HEK293 (cell line): ENCODE measurements at regions of chr5 and their contacts with region 1.

Region 1: DNA sequence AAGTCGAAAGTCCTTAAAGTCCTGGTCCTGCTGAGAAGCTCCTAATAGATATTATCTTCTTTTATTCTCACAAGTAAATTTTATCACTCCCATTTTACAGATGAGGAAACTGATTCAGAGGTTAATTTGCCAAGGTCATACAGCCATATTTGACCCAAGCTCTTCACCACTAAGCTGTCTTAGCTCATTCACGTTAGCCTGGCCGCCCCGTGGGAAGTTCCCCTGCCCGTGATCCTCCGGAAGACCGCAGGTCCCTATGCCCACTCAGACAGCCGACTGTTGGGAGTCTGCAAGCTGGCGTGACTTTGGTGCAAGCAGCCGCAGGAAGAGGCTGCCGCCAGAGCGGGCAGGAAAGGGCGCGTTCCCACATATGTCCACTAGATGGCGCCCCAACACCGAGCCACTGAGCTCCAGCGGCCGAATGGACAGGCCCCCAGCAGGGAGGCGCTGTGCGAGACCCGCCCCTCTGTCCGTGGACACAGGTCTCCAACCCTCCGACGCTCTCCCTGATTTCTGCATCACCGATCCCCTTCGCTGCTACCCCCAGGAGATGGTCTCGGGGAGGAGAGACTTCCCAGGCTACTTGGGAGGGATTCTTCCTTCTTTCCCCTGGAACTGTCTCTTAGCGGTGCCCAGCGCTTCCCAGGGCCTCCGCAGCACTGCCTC is 10.0 kb upstream of the ARAP3 start:
- H3K4me3 ChIP-seq: peak overlapping the region; percentile 2; the same call in 1 of the 2 replicates
- H3K27ac ChIP-seq: no peak overlapping the region
- H3K4me1 ChIP-seq: no peaks in the 10 kb centered on the region
- CTCF ChIP-seq: peak; percentile 99

Region 2: GRCh38 chr5:141492168-141492885 is 199.7 kb before region 1 on chr5:
- CTCF ChIA-PET with region 1: no interaction called
- POLR2A ChIA-PET with region 1: no interaction called
- H3K4me3 ChIP-seq: no peak overlapping the region
- H3K27ac ChIP-seq: no peak overlapping the region
- H3K4me1 ChIP-seq: no peaks in the 10 kb centered on the region
- CTCF ChIP-seq: no peak

Region 3: DNA sequence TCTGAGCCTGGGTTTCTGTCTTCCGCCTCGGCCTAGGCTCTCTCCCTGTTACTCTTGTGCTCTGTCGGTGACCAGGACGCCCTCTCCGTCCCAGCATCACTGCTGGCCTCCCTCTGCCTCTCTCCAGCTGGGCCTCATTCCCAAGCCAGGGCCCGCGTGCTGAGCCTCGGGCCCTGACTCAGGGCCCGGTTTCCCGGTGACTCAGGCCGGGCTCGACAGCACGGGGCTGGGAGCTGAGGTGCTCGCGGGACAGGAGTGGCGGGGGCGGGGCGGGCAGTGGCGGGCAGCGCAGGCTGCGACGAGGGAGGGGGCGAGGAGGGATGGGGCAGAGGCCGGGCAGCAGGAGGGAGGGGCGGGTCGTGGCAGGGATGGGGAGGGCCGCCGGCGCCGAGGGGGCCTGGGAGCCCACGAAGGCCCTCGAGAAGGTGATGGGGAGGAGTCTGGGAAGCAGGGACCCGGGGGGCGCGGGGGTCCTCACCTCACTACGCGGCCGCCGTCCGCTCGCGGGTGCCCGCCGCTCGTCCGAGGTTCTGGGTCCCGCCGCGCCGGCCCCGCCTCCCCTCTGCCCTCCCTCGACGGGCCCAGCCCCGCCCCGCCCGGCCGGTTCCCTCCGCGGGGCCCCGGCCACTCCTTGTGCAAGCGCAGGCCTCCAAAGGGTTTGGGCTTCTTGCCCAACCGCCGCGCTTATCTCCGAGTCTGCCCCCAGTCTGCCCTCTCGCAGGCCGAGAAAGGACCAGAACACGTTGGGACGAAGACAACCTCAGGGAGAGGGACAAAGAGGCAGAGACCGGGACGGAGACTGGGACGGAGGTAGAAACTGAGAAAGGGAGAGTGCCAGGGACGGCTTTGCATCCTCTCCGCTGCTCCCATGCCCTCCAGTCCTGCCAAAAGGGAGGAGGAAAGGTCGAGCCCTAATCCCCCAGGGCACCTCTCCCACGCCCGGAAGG is 10.0 kb before region 1 on chr5 and contains the start of gene ARAP3:
- CTCF ChIA-PET with region 1: interaction called, 28 read pairs
- POLR2A ChIA-PET with region 1: interaction called, 8 read pairs
- H3K4me3 ChIP-seq: peak within 1 kb of the TSS; percentile 52
- H3K27ac ChIP-seq: peak within 1 kb of the TSS; percentile 52; the same call in 1 of the 2 replicates
- H3K4me1 ChIP-seq: no peaks in the 10 kb centered on the region
- CTCF ChIP-seq: no peak

Region 4: DNA sequence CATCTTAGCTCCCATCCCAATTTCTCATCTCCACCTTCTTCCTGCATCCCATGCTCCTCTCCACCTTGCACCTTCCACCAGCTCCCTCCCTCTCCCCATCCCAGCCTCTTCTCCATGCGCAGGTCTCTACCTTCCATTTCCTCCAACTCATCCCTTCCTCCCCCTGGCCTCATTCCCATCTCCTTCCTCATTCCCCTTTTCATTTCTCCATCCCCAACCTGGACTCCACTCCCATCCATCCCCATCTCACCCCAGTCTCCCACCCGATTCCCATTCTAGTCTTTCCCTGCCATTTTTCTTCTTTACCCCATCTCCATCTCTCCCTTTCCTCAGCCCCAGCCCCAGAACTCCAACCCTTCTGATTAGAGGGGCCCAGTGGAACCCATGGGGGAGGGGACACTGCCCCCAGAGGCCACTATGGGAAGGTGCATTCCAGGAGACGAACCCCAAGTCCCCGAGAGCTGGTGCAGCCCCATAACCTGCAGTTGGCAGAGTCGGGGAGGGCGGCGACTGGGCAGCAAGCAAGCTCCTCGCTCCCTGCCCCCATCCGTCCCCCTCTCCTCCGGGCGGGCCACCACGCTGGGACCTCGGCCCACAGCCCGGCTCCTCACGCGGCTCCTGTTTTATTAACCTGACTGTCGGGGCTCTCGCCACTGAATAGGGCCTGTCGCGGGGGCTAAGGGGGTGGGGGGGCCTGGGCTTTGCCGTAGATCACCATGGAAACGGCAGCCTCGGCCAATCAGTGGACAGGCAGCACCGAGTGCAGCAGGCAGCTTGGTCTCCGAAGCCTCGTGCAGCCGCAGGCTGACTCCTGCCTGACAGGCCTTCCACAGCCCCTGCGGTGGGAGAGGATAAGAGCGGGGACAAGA is 119.5 kb after region 1 on chr5:
- CTCF ChIA-PET with region 1: interaction called, 41 read pairs
- POLR2A ChIA-PET with region 1: no interaction called
- H3K4me3 ChIP-seq: no peak overlapping the region
- H3K27ac ChIP-seq: no peak overlapping the region
- H3K4me1 ChIP-seq: no peaks in the 10 kb centered on the region
- CTCF ChIP-seq: peak; percentile 59

Region 5: DNA sequence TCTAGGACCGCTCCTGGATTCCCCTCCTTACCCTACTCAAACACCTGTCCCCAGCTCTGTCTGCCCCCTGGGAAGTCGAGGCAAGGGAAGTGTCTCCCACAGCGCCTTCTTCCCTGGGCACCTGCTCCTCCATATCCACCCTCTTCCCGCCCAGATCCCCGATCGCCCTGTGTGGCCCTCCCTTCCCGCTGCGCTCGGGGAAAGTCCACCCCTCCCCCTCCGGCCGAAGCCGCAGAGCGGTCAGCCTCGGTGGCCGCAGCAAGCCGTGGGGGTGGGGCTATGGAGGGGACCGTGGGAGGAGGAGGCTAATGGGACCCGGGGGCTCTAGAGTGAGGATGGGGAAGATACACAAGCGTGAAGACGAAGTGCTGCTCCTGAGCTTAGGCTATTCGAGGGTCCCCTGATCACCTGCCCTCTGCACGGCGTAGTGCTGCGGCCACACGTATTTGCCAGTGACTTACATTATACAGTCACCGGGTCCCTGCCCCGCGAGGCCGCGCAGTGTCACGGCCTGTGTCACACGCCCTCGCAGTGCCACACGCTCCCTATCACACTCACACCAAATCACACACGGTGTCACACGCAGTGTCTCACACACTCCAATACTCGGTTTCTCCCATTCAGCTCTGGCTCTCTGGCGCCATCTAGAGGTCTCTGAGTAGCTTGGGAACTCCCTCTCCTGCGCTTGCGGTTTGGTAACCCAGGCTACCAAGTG is 186.9 kb after region 1 on chr5:
- CTCF ChIA-PET with region 1: interaction called, 104 read pairs
- POLR2A ChIA-PET with region 1: interaction called, 9 read pairs
- H3K4me3 ChIP-seq: peak overlapping the region; percentile 30
- H3K27ac ChIP-seq: peak overlapping the region; percentile 7; the same call in 1 of the 2 replicates
- H3K4me1 ChIP-seq: peaks cover 8% of the 10 kb centered on the region
- CTCF ChIP-seq: peak; percentile 96

Region 6: DNA sequence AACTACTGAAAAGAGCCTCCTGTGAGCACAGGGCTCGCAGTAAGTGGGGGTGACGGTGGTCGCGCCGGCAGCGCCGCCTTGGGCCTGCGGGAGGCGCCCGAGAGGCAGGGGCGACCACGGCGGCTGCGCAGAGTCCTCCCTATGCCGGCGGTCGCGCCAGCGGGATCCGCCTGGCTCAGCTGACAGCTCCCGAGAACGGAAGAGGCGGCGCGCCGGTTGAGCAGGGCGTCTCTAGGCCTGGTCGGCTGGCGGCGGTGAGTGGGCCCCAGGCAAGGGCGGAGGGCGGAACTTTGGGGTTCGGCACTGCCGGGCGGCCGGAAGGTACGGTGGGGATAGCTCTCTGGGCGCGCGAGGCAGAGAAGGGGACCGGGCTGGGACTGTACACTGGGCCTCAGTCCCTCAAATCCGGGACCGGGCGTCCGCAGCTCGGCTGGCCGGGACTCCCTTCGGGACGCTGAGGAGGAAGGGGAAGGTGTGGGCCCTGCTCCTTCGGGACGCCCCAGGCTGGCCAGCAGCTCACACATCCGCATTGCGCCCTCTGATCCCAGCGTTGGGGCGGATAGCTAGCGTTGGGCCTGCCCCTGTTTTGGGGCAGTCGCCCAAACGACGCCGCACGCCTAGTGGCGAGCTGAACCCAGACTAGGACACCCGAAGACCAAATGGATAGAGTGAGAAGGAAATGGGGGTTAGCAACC is 277.1 kb after region 1 on chr5 and contains the start of gene RNF14:
- CTCF ChIA-PET with region 1: interaction called, 27 read pairs
- POLR2A ChIA-PET with region 1: interaction called, 3 read pairs
- H3K4me3 ChIP-seq: peak within 1 kb of the TSS; percentile 93
- H3K27ac ChIP-seq: peak within 1 kb of the TSS; percentile 74
- H3K4me1 ChIP-seq: peaks cover 6% of the 10 kb centered on the region
- CTCF ChIP-seq: peak; percentile 91

Region 7: DNA sequence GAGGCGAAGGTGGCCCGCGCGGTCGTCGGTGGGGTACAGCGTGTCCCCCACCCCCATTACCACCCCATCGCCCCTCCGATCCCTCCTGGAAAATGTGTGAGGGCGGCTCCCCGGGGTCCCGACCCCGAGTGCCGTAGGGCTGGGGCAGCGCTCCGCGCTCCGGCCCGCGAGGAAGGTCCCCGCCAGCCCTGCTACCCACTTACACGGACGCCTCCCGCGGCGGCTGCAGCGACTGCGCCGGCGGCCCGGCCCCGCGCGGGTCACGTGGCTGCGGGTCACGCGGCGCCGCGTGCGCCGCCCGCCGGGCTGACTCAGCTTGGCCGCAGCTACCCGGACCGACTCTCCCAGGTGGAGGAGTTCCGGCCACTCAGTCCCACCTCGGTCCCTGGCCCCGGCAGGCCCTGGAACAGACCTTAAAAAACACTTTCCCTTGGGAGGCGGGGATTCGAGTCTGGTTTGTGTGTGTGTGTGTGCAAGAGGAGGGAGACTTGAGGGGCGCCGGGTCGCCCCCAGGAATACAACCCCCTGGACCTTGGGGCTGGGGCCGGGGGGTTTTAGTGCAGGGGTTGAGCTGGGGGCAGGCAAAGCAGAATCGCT is 320.9 kb after region 1 on chr5 and contains the start of gene GNPDA1:
- CTCF ChIA-PET with region 1: interaction called, 18 read pairs
- POLR2A ChIA-PET with region 1: no interaction called
- H3K4me3 ChIP-seq: peak within 1 kb of the TSS; percentile 62
- H3K27ac ChIP-seq: peak within 1 kb of the TSS; percentile 49; the same call in 1 of the 2 replicates
- H3K4me1 ChIP-seq: no peaks in the 10 kb centered on the region
- CTCF ChIP-seq: 0 out of 2 replicates have a peak, but pooled peaks have one; percentile 7